Transverse colon (tissue), 4 donors: ENCODE measurements at regions of chr7 and their contacts with region 1.

Region 1: DNA sequence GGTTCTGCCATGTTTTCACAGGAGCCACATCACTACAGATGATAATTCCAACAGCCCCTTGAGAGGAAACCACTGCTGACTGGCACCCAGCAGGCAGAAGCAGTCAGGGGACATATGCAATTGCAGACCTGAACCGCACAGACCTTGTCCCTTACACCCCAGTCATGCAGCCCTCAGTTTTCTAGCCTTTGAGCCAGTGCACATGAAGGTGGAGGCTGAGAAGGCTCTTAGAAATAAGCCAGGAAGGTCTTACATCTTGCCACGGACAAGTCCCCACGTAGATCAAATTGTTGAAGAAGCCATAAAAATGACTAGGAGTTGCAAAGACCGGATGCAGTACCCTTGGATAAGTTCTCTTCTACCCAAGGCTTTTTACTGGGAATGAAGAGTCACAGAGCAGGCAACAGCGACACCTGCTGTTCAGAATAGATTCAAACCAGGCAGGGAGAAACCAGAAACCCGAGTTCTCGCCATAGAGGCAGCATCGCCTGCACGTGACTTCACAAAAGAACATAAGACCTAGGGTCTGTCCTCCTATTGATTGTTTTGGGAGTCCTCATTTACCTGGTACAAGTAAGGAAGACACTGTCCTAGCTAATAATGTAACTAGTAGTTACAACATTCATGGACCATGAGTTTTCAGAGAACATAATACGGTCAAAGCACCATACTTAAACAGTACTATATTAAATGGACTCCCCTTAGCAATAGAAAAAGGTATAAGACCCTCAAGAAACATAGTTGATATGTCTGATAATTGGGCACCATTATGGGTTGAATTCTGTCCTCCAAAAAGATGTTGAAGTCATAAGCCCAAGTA is 11.1 kb downstream of the STEAP1B start:
- DNase-seq: peak; percentile 74
- H3K4me3 ChIP-seq: no peak overlapping the region
- H3K27ac ChIP-seq: no peak overlapping the region
- H3K4me1 ChIP-seq: no peaks in the 10 kb centered on the region
- H3K27me3 ChIP-seq: no peaks in the 10 kb centered on the region
- CTCF ChIP-seq: peak; percentile 86 to 94 (median 87)
- EP300 ChIP-seq: no peak
- POLR2A ChIP-seq: no peak

Region 2: DNA sequence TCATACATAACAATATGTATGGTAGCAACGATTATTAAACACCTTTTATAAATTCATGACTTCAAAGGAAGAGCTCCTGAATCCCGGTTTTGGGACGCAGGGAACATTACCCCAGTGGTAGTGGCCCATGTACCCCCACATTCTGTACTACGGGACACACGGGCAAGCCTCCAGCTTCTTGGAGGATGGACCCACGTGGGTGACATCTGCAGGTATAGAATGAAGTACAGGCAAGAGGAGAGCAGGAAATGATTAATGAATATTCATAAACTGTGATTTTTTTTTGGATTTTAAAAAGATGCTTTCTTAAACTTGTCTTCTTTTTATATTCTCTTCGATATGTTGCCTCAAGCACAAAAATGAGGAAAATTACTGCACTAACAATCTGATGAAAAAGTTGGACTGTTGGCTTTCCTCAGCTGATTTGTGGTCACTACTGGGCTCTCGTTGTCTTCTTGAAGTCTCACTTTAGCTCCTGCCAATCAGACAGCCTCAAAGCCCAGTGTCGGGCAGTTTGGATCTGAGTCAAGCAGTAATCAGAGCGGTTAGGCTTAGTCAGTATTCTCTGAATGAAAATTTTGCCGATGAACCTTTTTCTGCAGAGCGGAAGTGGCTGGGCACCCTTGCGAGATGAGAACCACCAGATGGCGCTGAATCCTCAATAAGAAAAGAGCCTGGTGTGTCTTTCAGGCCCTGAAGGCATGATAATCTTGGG is 385.4 kb before region 1 on chr7:
- in situ Hi-C with region 1: loop called in 3 of 4 experiments (anchors 5 to 10 kb)
- intact Hi-C with region 1: loop called (anchors 2 kb)
- DNase-seq: peak; percentile 59
- H3K4me3 ChIP-seq: no peak overlapping the region
- H3K27ac ChIP-seq: no peak overlapping the region
- H3K4me1 ChIP-seq: no peaks in the 10 kb centered on the region
- H3K27me3 ChIP-seq: peaks cover 5% of the 10 kb centered on the region
- CTCF ChIP-seq: peak; percentile 61 to 73 (median 68)
- EP300 ChIP-seq: no peak
- POLR2A ChIP-seq: no peak

Region 3: DNA sequence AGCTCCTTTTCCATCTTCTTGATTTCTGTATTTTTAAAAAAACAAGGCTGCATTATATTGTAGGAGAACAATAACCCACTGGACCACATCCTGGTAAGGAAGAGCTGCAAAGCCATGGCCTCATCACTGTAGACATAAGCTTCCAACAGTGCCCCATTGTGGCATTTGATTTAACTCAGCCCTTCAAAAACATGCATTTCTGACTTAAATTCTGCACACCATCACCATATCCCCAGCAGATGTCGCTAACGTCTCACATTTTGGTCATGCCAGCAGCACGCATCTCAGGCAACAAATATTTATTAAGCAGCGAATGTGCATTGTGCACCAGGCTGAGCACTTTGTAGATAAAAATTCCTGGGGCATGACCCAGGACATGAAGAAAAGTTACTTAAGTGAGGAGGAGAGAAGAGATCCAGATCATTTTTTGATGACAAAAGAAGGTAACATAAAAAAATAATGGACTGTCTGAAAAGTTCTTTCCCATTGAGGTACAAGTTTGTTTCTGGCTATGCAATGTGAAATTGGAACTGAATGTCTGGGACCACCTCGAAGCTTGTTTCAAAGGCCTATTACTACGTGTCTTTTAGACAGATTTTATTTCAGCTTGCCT is 378.5 kb before region 1 on chr7:
- in situ Hi-C with region 1: loop called (anchors 5 to 10 kb)
- intact Hi-C with region 1: loop called (anchors 2 kb)
- DNase-seq: peak; percentile 48
- H3K4me3 ChIP-seq: no peak overlapping the region
- H3K27ac ChIP-seq: no peak overlapping the region
- H3K4me1 ChIP-seq: no peaks in the 10 kb centered on the region
- H3K27me3 ChIP-seq: no peaks in the 10 kb centered on the region
- CTCF ChIP-seq: peak; percentile 67 to 77 (median 72)
- EP300 ChIP-seq: no peak
- POLR2A ChIP-seq: no peak